Right ventricle myocardium inferior (tissue), 1 donor: ENCODE measurements at regions of chr14 and their contacts with region 1.

Region 1: GRCh38 chr14:24366721-24367513 is 1.1 kb upstream of the NFATC4 start:
- DNase-seq: peak; percentile 93
- ATAC-seq: peak; percentile 88

Region 2: DNA sequence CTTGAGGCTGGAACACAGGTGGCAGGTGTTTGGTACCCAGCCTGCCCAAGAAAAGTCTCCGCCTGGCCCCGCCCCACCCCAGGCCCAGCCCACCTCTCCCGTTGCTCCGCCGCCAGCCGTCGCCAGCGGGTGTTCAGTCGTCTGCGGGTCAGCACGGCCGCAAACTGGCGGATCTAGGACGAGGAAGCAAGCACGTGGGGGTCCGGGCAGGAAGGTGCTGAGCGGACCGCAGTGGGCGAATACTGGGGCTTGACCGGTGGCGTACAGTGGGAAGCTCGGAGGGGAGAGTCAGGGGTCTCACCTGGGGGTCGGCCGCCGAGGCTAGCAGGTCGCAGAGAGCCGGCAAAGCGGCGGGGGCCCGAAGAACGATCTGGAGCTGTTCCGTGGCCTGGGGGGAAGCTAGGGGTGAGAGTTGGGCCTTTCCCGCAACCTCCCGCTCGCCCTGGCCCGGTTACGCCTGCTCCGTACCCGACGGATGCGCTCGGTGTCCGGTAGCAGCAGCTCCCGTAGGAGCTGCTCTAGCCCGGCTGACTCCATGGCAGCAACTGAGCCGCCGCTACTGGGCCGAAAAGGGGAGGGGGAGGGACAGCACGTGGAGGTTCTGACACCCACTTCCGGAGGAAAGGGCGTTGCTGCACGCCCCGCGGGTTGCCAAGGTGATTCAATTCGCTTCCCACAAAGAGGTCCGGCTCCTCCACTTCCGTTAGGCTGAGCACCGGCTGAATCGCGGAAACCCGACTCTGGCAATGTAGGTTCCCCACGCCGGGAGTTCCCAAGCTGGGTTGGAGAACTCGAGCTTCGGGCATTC is 178.5 kb before region 1 on chr14 and contains the start of gene IPO4:
- intact Hi-C with region 1: no loop called
- DNase-seq: peak; percentile 95
- ATAC-seq: peak; percentile 96
- total RNA-seq, gene IPO4: 10.5 TPM

Region 3: GRCh38 chr14:24299255-24300195 is 67.4 kb before region 1 on chr14 and contains the starts of genes DHRS1 and NOP9:
- intact Hi-C with region 1: no loop called
- DNase-seq: peak; percentile 96
- ATAC-seq: peak; percentile 88
- total RNA-seq, gene DHRS1: 8.3 TPM
- total RNA-seq, gene NOP9: 23.0 TPM

Region 4: DNA sequence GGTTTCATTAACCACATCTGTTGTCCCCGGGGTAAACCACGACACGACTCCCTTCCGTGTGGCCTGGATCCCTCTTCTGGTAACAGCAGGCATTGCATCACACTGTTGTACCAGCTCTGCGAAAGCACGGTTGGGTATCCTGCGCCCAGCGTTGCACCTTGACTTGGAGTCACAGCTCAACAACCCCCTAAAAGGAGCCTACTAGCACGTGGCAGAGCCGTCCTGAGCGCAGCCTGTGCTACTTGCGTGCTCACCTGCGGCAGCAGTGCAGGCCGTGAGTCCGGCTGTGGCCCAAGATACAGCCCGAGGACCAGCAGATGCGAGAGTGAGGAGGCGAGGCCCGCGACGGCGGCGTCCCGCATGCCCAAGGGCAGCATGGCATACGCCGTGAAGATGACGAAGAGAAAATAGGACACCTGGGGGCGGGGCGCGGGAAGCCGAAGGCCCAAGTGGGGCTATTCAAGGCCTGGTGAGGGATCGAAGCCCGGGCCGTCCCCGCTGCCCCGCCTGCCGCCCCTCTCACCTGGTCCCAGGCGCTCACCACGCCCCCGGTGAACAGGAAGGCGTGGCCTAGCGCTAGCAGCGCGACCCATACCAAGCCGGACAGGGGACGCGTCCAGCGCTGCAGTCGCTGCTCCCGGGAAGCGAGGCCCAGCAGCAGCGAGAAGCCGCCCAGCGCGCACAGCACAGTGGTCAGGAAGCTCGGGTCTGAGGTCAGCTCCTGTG is 34.5 kb before region 1 on chr14:
- intact Hi-C with region 1: loop called (anchors 2 kb)
- DNase-seq: peak; percentile 77
- ATAC-seq: peak; percentile 70

Region 5: GRCh38 chr14:24398653-24399446 is 31.9 kb after region 1 on chr14 and contains the start of gene NYNRIN:
- intact Hi-C with region 1: loop called (anchors 1 kb)
- DNase-seq: peak; percentile 76
- ATAC-seq: peak; percentile 77
- total RNA-seq, gene NYNRIN: 9.5 TPM